ENCODE measurements at regions of chr19 and their contacts with region 1.

Region 1: GRCh38 chr19:52622261-52622660 is 15.9 kb downstream of the ZNF83 start:
- DNase-seq: no peak
- H3K4me3 ChIP-seq: no peak overlapping the region
- H3K27ac ChIP-seq: no peak overlapping the region
- H3K4me1 ChIP-seq: no peaks in the 10 kb centered on the region
- H3K27me3 ChIP-seq: no peaks in the 10 kb centered on the region
- CTCF ChIP-seq: no peak

Region 2: GRCh38 chr19:52269338-52270261 is 352.7 kb before region 1 on chr19 and contains the start of gene ZNF766:
- intact Hi-C with region 1: loop called (anchors 10 kb)
- DNase-seq: peak; percentile 98 to 99
- H3K4me3 ChIP-seq: peak within 1 kb of the TSS; percentile 93 to 96
- H3K27ac ChIP-seq: peak within 1 kb of the TSS; percentile 99
- H3K4me1 ChIP-seq: peaks cover 0 to 28% (median 19%) of the 10 kb centered on the region in 4 donors
- H3K27me3 ChIP-seq: no peaks in the 10 kb centered on the region
- CTCF ChIP-seq: no peak

Measured in tibial artery (tissue), 4 donors.